WTC11 (cell line): ENCODE measurements at regions of chr1 and their contacts with region 1.

Region 1: GRCh38 chr1:101309334-101310311 is 72.8 kb downstream of the S1PR1 start:
- DNase-seq: peak; percentile 51
- ATAC-seq: peak; percentile 77
- H3K4me3 Mint-ChIP-seq: peak overlapping the region; percentile 82
- H3K27ac Mint-ChIP-seq: peak overlapping the region; percentile 93
- H3K4me1 Mint-ChIP-seq: peaks cover 35% of the 10 kb centered on the region
- H3K27me3 Mint-ChIP-seq: peaks cover 51% of the 10 kb centered on the region
- CTCF ChIP-seq: peak; percentile 71

Region 2: GRCh38 chr1:101325144-101325543 is 15.5 kb after region 1 on chr1:
- CTCF ChIA-PET with region 1: interaction called, 19 read pairs
- POLR2A ChIA-PET with region 1: no interaction called
- DNase-seq: no peak
- ATAC-seq: no peak
- H3K4me3 Mint-ChIP-seq: no peak overlapping the region
- H3K27ac Mint-ChIP-seq: no peak overlapping the region
- H3K4me1 Mint-ChIP-seq: peaks cover 22% of the 10 kb centered on the region
- H3K27me3 Mint-ChIP-seq: no peaks in the 10 kb centered on the region
- CTCF ChIP-seq: no peak

Region 3: GRCh38 chr1:101357444-101357986 is 47.9 kb after region 1 on chr1:
- CTCF ChIA-PET with region 1: interaction called, 94 read pairs
- POLR2A ChIA-PET with region 1: no interaction called
- DNase-seq: peak; percentile 64
- ATAC-seq: peak; percentile 98
- H3K4me3 Mint-ChIP-seq: no peak overlapping the region
- H3K27ac Mint-ChIP-seq: no peak overlapping the region
- H3K4me1 Mint-ChIP-seq: peaks cover 6% of the 10 kb centered on the region; the same call in 1 of the 2 replicates
- H3K27me3 Mint-ChIP-seq: no peaks in the 10 kb centered on the region
- CTCF ChIP-seq: peak; percentile 75

Region 4: GRCh38 chr1:101455166-101455565 is 145.5 kb after region 1 on chr1:
- CTCF ChIA-PET with region 1: interaction called, 12 read pairs
- POLR2A ChIA-PET with region 1: no interaction called
- DNase-seq: no peak
- ATAC-seq: no peak
- H3K4me3 Mint-ChIP-seq: no peak overlapping the region
- H3K27ac Mint-ChIP-seq: no peak overlapping the region
- H3K4me1 Mint-ChIP-seq: no peaks in the 10 kb centered on the region
- H3K27me3 Mint-ChIP-seq: no peaks in the 10 kb centered on the region
- CTCF ChIP-seq: no peak